AG04450 (cell line): ENCODE measurements at regions of chr11 and their contacts with region 1.

Region 1: GRCh38 chr11:33987975-33988580 is 63.5 kb upstream of the CAPRIN1 start:
- DNase-seq: peak; percentile 49
- H3K4me3 ChIP-seq: no peak overlapping the region
- H3K27ac ChIP-seq: no peak overlapping the region
- H3K27me3 ChIP-seq: no peaks in the 10 kb centered on the region
- CTCF ChIP-seq: peak; percentile 79

Region 2: GRCh38 chr11:33835143-33835878 is 152.8 kb before region 1 on chr11:
- CTCF ChIA-PET with region 1: interaction called, 10 read pairs
- POLR2A ChIA-PET with region 1: no interaction called
- DNase-seq: peak; percentile 13
- H3K4me3 ChIP-seq: no peak overlapping the region
- H3K27ac ChIP-seq: no peak overlapping the region
- H3K27me3 ChIP-seq: peaks cover 16% of the 10 kb centered on the region
- CTCF ChIP-seq: peak; percentile 36; the same call in 1 of the 2 replicates

Region 3: DNA sequence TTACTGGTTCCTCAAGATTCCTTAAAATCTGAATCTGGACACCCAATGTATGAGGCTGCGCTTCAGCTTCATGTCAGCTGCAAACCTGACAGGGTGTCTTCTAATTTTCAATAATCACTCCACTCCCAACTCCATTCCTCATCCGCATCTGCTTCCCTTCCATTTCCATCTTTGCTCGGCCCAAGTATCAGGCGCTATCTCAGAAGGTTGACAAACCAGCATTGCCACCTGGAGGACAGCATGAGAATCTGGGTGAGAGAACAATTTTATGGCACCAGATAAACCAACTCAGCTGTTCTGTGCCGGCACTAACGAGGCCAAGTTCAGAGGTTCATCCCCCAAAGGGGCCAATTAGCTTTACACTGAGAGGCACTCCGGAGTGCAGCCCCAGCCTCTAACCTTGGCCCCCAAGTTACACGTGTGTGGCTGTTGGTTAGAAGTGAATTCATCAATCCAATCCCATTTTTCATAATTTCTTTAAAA is 17.1 kb before region 1 on chr11:
- CTCF ChIA-PET with region 1: interaction called, 22 read pairs
- POLR2A ChIA-PET with region 1: no interaction called
- DNase-seq: peak; percentile 4
- H3K4me3 ChIP-seq: no peak overlapping the region
- H3K27ac ChIP-seq: no peak overlapping the region
- H3K27me3 ChIP-seq: peaks cover 15% of the 10 kb centered on the region
- CTCF ChIP-seq: peak; percentile 64

Region 4: DNA sequence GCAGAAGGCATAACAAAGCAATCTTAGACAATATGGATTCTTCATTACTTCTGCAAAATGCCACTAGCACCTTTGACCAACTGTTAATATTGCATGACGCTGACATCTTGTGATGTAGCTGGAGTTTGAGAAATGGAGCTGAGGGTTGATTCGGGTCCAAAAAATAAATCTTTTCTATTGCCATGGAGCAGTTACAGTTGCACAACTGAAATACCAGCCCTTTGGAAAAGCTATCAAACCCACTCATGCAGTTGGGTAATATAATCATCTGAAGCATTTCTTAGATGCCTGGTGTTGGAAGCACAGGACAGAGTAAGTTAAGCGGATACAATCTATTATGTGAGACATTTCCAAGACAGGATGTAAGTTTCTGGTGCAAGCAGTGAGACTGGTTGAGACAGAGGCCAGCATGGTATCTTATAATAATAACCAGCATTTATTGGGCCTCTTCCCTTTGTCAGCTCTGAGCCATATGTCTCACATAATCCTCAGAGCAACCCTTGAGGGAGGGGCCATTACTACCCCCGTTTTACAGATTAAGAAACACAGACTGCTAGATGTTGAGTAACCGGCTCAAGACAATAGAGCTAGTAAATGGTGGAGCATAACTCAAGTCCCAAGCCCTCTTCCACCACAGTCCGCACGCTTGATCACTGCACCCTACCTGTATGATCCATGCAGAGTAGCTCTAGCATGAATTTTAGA is 11.4 kb before region 1 on chr11:
- CTCF ChIA-PET with region 1: interaction called, 22 read pairs
- POLR2A ChIA-PET with region 1: no interaction called
- DNase-seq: no peak
- H3K4me3 ChIP-seq: no peak overlapping the region
- H3K27ac ChIP-seq: no peak overlapping the region
- H3K27me3 ChIP-seq: peaks cover 26% of the 10 kb centered on the region
- CTCF ChIP-seq: no peak

Region 5: GRCh38 chr11:34075178-34075820 is 87.2 kb after region 1 on chr11:
- CTCF ChIA-PET with region 1: no interaction called
- POLR2A ChIA-PET with region 1: no interaction called
- DNase-seq: no peak
- H3K4me3 ChIP-seq: no peak overlapping the region
- H3K27ac ChIP-seq: peak overlapping the region; percentile 47
- H3K27me3 ChIP-seq: no peaks in the 10 kb centered on the region
- CTCF ChIP-seq: no peak

Region 6: DNA sequence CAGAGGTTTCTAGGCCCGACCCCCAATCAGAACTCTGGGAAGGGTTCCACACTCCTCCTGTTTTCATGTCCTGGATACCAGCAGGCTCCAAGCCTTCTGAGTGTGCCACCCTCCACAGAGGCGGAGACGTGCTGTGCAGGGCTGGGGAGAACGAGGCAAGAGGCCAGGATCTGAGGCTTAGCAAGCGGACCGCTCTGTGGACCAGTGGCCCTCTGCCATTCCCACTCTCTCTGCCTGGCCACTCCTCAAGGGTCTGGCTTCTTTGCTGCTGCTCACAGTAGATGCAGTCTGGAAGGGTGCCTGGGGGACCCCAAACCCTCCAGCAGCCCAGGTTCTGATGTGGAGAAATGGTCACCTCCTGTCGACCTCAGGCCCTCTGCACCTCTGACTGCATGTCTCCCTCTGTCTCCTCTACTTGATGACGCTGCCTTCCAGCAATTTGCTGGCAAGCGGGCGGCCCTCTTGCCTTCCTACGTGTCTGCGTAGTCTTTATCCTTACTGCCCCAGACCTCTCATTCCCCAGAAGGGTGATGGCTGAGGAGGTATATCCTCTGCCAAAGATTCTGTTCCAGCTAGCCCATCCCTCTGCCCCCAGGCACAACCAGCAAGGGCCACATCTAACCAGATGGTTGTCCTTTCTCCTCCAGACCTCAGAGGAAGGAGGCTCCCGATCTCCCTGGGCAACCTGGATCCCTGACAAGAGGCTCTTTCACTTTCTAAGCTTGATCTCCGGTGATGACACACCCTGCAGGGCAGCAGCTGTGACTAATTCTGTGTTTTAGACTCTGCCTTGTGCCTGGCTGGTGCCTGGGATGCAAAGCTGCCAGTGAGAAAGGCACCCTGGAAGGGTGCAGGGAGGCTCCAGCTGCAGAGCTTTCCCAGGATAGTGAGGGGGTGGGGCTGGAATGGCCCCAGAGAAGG is 204.7 kb after region 1 on chr11:
- CTCF ChIA-PET with region 1: no interaction called
- POLR2A ChIA-PET with region 1: no interaction called
- DNase-seq: peak; percentile 69
- H3K4me3 ChIP-seq: peak overlapping the region; percentile 53
- H3K27ac ChIP-seq: peak overlapping the region; percentile 95
- H3K27me3 ChIP-seq: peaks cover 5% of the 10 kb centered on the region
- CTCF ChIP-seq: no peak